ENCODE measurements at regions of chr3 and their contacts with region 1.

Region 1: DNA sequence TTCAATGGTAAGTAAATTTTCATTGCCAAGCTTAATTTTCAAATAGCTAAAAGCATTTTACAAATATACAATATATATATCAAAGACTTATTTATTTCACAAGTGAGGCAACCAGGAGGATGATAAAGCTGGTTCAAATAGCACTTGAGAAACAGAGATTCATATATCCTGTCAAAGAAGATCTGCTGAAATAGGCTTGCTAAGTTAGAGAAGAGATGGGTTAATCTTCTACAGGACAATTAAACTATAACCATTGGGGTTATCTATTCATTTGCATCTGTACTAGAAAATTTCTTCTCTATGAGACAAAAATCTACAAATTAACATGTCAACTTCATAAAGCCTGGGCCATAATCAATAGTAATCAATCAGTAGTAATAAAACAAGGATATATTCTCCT is 637.7 kb upstream of the UBE2E2 start:
- DNase-seq: no peak

Region 2: GRCh38 chr3:22960105-22960984 is 395.0 kb after region 1 on chr3:
- intact Hi-C with region 1: loop called (anchors 5 kb)
- DNase-seq: no peak